PC-3 (cell line): ENCODE measurements at regions of chr11 and their contacts with region 1.

Region 1: GRCh38 chr11:121257992-121258391 is 34.6 kb upstream of the SC5D start:
- DNase-seq: peak; percentile 98
- ATAC-seq: peak; percentile 93
- H3K4me3 ChIP-seq: peak overlapping the region; percentile 2; the same call in 1 of the 2 replicates
- H3K27ac ChIP-seq: peak overlapping the region; percentile 67
- H3K4me1 ChIP-seq: peaks cover 34% of the 10 kb centered on the region
- H3K27me3 ChIP-seq: no peaks in the 10 kb centered on the region
- CTCF ChIP-seq: no peak

Region 2: GRCh38 chr11:121179306-121179705 is 78.7 kb before region 1 on chr11:
- CTCF ChIA-PET with region 1: no interaction called
- POLR2A ChIA-PET with region 1: no interaction called
- intact Hi-C with region 1: no loop called
- DNase-seq: no peak
- ATAC-seq: no peak
- H3K4me3 ChIP-seq: no peak overlapping the region
- H3K27ac ChIP-seq: no peak overlapping the region
- H3K4me1 ChIP-seq: no peaks in the 10 kb centered on the region
- H3K27me3 ChIP-seq: no peaks in the 10 kb centered on the region
- CTCF ChIP-seq: no peak

Region 3: GRCh38 chr11:121274332-121274991 is 16.5 kb after region 1 on chr11:
- CTCF ChIA-PET with region 1: no interaction called
- POLR2A ChIA-PET with region 1: no interaction called
- intact Hi-C with region 1: loop called (anchors 2 kb)
- DNase-seq: peak; percentile 86
- ATAC-seq: peak; percentile 98
- H3K4me3 ChIP-seq: peak overlapping the region; percentile 21; the same call in 1 of the 2 replicates
- H3K27ac ChIP-seq: peak overlapping the region; percentile 59
- H3K4me1 ChIP-seq: peaks cover 15% of the 10 kb centered on the region
- H3K27me3 ChIP-seq: no peaks in the 10 kb centered on the region
- CTCF ChIP-seq: no peak

Region 4: GRCh38 chr11:121334973-121335710 is 77.2 kb after region 1 on chr11:
- CTCF ChIA-PET with region 1: no interaction called
- POLR2A ChIA-PET with region 1: no interaction called
- intact Hi-C with region 1: no loop called
- DNase-seq: no peak
- ATAC-seq: no peak; the same call in 1 of the 2 replicates
- H3K4me3 ChIP-seq: no peak overlapping the region
- H3K27ac ChIP-seq: no peak overlapping the region
- H3K4me1 ChIP-seq: no peaks in the 10 kb centered on the region
- H3K27me3 ChIP-seq: peaks cover 12% of the 10 kb centered on the region; the same call in 1 of the 2 replicates
- CTCF ChIP-seq: peak; percentile 57

Region 5: GRCh38 chr11:121417055-121417551 is 159.1 kb after region 1 on chr11:
- CTCF ChIA-PET with region 1: no interaction called
- POLR2A ChIA-PET with region 1: no interaction called
- intact Hi-C with region 1: loop called (anchors 5 kb)
- DNase-seq: peak; percentile 98
- ATAC-seq: peak; percentile 68
- H3K4me3 ChIP-seq: no peak overlapping the region
- H3K27ac ChIP-seq: peak overlapping the region; percentile 38
- H3K4me1 ChIP-seq: peaks cover 35% of the 10 kb centered on the region
- H3K27me3 ChIP-seq: no peaks in the 10 kb centered on the region
- CTCF ChIP-seq: no peak